CD4-positive, alpha-beta T cell (primary cell): ENCODE measurements at regions of chr12 and their contacts with region 1.

Region 1: DNA sequence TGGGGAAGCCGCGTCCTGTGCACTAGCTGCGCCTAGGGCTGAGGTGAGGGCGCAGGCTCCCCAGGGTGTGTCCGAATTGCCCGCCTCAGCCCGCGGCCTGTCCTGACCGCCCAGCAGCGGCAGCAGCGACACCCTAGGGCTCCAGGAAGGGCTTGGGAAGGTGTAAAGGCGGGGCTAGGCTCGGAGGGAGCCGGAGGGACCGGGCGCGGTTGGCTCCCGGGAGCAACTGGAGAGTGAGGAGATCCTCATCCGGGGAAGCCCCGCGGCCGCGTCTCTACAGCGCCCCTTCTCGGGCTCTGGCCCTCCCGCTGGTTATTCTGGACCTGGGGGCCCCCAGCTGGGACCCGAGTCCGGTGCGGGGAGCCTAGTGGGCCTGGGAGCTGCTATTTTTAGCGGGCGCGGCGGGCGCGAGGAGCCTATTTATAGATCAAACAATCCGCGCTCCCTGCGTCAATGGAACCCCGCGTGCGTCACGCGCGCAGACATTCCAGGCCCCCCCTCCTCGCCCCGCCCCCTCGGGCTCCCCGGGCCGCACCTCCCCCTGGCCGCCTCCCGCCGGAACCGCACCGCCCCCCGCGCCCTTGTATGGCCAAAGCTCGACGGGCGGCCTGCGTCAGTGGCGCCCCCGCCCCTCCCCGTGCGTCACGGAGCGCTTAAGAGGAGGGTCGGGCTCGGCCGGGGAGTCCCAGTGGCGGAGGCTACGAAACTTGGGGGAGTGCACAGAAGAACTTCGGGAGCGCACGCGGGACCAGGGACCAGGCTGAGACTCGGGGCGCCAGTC is at the start of gene NR4A1:
- DNase-seq: peak; percentile 96 to 100 (median 99)
- ATAC-seq: peak; percentile 84
- H3K4me3 ChIP-seq: peak within 1 kb of the TSS; percentile 86
- H3K4me3 Mint-ChIP-seq: peak within 1 kb of the TSS; percentile 93
- H3K27ac ChIP-seq: peak within 1 kb of the TSS; percentile 91 to 98
- H3K27ac Mint-ChIP-seq: peak within 1 kb of the TSS; percentile 98
- H3K4me1 ChIP-seq: peaks cover 36% of the 10 kb centered on the region
- H3K4me1 Mint-ChIP-seq: peaks cover 41% of the 10 kb centered on the region
- H3K27me3 ChIP-seq: no peaks in the 10 kb centered on the region
- H3K27me3 Mint-ChIP-seq: no peaks in the 10 kb centered on the region
- CTCF ChIP-seq: no peak
- total RNA-seq, gene NR4A1: 67.0 to 79.2 TPM

Region 2: GRCh38 chr12:52004042-52004648 is 46.8 kb before region 1 on chr12:
- CTCF ChIA-PET with region 1: interaction called, 3 read pairs
- POLR2A ChIA-PET with region 1: interaction called, 7 read pairs
- intact Hi-C with region 1: loop called in 1 of 2 experiments (anchors 1 kb)
- DNase-seq: peak in 3 of 14 experiments; percentile 47 to 49 (median 48)
- ATAC-seq: no peak
- H3K4me3 ChIP-seq: no peak overlapping the region
- H3K4me3 Mint-ChIP-seq: no peak overlapping the region
- H3K27ac ChIP-seq: no peak overlapping the region
- H3K27ac Mint-ChIP-seq: peak overlapping the region; percentile 20
- H3K4me1 ChIP-seq: peaks cover 30% of the 10 kb centered on the region
- H3K4me1 Mint-ChIP-seq: peaks cover 21% of the 10 kb centered on the region
- H3K27me3 ChIP-seq: no peaks in the 10 kb centered on the region
- H3K27me3 Mint-ChIP-seq: no peaks in the 10 kb centered on the region
- CTCF ChIP-seq: peak; percentile 59

Region 3: DNA sequence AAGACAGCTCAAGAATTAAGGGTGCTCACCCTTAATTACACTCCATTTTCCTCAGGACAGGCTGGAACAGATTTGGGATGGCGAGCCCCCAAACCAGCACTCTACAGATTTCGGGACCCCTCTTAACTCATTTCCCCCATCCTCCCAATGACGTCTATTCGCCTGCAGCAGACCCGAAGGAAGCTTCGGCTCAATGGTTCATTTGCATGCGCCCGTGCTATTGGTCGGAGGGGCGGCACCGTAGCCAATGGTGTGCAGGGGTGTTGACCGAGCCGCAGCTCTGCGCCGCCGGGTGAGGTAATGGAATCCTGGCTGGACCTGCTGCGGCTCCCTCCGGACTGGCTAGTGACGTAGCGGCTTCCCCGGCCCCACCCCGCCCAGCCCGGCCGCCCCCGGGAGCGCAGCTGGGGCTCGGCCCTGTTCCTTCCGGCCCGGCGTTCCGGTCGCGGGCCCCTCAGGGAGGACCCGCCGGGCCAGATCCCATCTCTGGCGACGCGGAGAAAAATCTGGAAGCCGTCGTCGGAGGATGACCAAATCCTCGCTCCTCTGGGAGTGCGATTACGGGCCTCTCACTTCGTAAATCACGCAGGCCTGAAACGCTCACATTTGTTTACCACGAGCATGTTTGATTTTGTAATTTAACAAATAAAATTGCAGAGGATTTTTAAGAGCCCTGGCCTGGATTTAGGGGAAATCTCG is 18.0 kb before region 1 on chr12:
- CTCF ChIA-PET with region 1: interaction called, 8 read pairs
- POLR2A ChIA-PET with region 1: interaction called, 21 read pairs
- intact Hi-C with region 1: loop called (anchors 1 to 2 kb)
- DNase-seq: peak; percentile 59 to 97 (median 79)
- ATAC-seq: peak; percentile 83
- H3K4me3 ChIP-seq: peak overlapping the region; percentile 56
- H3K4me3 Mint-ChIP-seq: peak overlapping the region; percentile 80
- H3K27ac ChIP-seq: peak overlapping the region; percentile 43 to 84
- H3K27ac Mint-ChIP-seq: peak overlapping the region; percentile 86
- H3K4me1 ChIP-seq: peaks cover 40% of the 10 kb centered on the region
- H3K4me1 Mint-ChIP-seq: peaks cover 33% of the 10 kb centered on the region
- H3K27me3 ChIP-seq: no peaks in the 10 kb centered on the region
- H3K27me3 Mint-ChIP-seq: no peaks in the 10 kb centered on the region
- CTCF ChIP-seq: no peak